ENCODE measurements at regions of chr3 and their contacts with region 1.

Region 1: GRCh38 chr3:141311496-141312353 is 56.6 kb upstream of the ZBTB38 start:
- DNase-seq: peak; percentile 98
- H3K4me3 ChIP-seq: peak overlapping the region; percentile 49 to 72
- H3K27ac ChIP-seq: peak overlapping the region; percentile 63 to 80
- H3K4me1 ChIP-seq: no peaks in the 10 kb centered on the region
- H3K27me3 ChIP-seq: no peaks in the 10 kb centered on the region
- CTCF ChIP-seq: peak; percentile 28 to 90 (median 77)
- POLR2A ChIP-seq: peak; percentile 67

Region 2: GRCh38 chr3:141355242-141355641 is 43.5 kb after region 1 on chr3:
- intact Hi-C with region 1: loop called (anchors 5 kb)
- DNase-seq: no peak
- H3K4me3 ChIP-seq: no peak overlapping the region
- H3K27ac ChIP-seq: no peak overlapping the region
- H3K4me1 ChIP-seq: no peaks in the 10 kb centered on the region
- H3K27me3 ChIP-seq: no peaks in the 10 kb centered on the region
- CTCF ChIP-seq: no peak
- POLR2A ChIP-seq: no peak

Region 3: GRCh38 chr3:141561426-141562034 is 249.8 kb after region 1 on chr3:
- intact Hi-C with region 1: loop called (anchors 5 kb)
- DNase-seq: peak; percentile 47
- H3K4me3 ChIP-seq: no peak overlapping the region
- H3K27ac ChIP-seq: no peak overlapping the region
- H3K4me1 ChIP-seq: no peaks in the 10 kb centered on the region
- H3K27me3 ChIP-seq: no peaks in the 10 kb centered on the region
- CTCF ChIP-seq: peak; percentile 79 to 99 (median 92)
- POLR2A ChIP-seq: no peak

Region 4: DNA sequence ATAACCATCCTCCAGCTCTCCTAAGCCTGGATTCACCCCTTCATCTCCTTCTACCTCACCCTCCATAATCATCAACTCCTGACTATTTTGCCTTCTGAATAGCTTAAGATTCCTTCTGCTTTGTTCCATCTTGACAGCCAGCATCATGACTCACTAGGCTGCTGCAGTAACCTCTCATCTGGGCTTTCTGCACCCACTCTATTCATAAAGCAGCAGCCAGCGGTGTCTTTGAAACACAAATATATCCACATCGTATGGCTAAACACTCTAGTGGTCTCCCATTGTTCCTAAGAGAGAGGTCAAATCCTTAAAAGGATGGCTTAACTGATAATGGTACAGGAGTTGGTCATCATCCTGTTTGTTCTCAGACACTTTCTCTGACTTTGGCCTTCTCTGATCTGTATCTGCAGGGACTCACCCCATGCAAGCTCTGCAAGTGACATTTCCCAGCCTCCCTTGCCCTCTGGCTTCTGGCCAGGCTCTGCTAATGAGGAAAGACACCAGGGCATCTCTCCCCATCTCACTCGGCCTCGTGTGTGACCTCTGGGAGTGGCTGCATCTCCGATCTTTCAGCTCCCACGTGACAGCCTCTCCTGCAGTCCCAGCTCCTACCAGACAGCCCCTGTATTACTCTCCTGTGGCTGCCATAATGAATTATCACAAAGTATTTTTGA is 457.6 kb after region 1 on chr3:
- intact Hi-C with region 1: no loop called
- DNase-seq: no peak
- H3K4me3 ChIP-seq: no peak overlapping the region
- H3K27ac ChIP-seq: no peak overlapping the region
- H3K4me1 ChIP-seq: no peaks in the 10 kb centered on the region
- H3K27me3 ChIP-seq: no peaks in the 10 kb centered on the region
- CTCF ChIP-seq: no peak
- POLR2A ChIP-seq: no peak